ENCODE measurements at regions of chr5 and their contacts with region 1.

Region 1: GRCh38 chr5:9587119-9587518 is 41.2 kb upstream of the SEMA5A start:
- DNase-seq: no peak
- ATAC-seq: peak; percentile 89
- H3K4me3 ChIP-seq: no peak overlapping the region
- H3K27ac ChIP-seq: no peak overlapping the region
- H3K4me1 ChIP-seq: no peaks in the 10 kb centered on the region
- H3K27me3 ChIP-seq: no peaks in the 10 kb centered on the region
- CTCF ChIP-seq: no peak

Region 2: GRCh38 chr5:9601055-9601739 is 14.1 kb after region 1 on chr5:
- intact Hi-C with region 1: loop called (anchors 2 kb)
- DNase-seq: no peak
- ATAC-seq: no peak
- H3K4me3 ChIP-seq: no peak overlapping the region
- H3K27ac ChIP-seq: no peak overlapping the region
- H3K4me1 ChIP-seq: no peaks in the 10 kb centered on the region
- H3K27me3 ChIP-seq: no peaks in the 10 kb centered on the region
- CTCF ChIP-seq: no peak

Region 3: DNA sequence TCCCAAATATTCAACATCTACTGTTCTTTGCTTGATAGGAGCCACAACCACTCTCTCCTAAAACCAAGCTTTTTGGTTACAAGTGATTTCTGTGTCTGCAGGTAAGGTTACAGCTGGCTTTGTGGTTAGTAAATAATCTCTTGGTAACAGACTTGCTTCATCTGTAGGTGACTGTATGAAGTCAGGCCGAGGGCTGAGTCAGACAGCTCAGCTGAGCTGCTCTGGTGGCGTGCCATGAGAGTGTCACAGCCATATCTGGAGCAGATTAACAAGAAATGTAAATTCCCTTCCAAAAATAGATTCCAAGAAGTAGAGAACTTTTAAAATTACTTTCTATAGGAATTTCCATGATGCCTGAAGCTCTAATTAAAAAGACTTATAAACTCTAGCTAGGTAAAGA is 66.7 kb after region 1 on chr5:
- intact Hi-C with region 1: no loop called
- DNase-seq: no peak
- ATAC-seq: peak; percentile 42
- H3K4me3 ChIP-seq: no peak overlapping the region
- H3K27ac ChIP-seq: no peak overlapping the region
- H3K4me1 ChIP-seq: no peaks in the 10 kb centered on the region
- H3K27me3 ChIP-seq: no peaks in the 10 kb centered on the region
- CTCF ChIP-seq: no peak